Activated CD4-positive, alpha-beta memory T cell treated with anti-CD3 and anti-CD28 coated beads for 36 hours (primary cell): ENCODE measurements at regions of chr4 and their contacts with region 1.

Region 1: GRCh38 chr4:4488405-4489404 is 53.1 kb downstream of the STX18 start:
- DNase-seq: peak; percentile 84
- H3K4me3 Mint-ChIP-seq: no peak overlapping the region
- H3K27ac Mint-ChIP-seq: no peak overlapping the region
- H3K4me1 Mint-ChIP-seq: peaks cover 11% of the 10 kb centered on the region
- H3K27me3 Mint-ChIP-seq: no peaks in the 10 kb centered on the region

Region 2: GRCh38 chr4:4477796-4478195 is 10.9 kb before region 1 on chr4:
- CTCF ChIA-PET with region 1: interaction called, 10 read pairs
- POLR2A ChIA-PET with region 1: no interaction called
- intact Hi-C with region 1: no loop called
- DNase-seq: no peak
- H3K4me3 Mint-ChIP-seq: no peak overlapping the region
- H3K27ac Mint-ChIP-seq: no peak overlapping the region
- H3K4me1 Mint-ChIP-seq: peaks cover 16% of the 10 kb centered on the region
- H3K27me3 Mint-ChIP-seq: no peaks in the 10 kb centered on the region

Region 3: DNA sequence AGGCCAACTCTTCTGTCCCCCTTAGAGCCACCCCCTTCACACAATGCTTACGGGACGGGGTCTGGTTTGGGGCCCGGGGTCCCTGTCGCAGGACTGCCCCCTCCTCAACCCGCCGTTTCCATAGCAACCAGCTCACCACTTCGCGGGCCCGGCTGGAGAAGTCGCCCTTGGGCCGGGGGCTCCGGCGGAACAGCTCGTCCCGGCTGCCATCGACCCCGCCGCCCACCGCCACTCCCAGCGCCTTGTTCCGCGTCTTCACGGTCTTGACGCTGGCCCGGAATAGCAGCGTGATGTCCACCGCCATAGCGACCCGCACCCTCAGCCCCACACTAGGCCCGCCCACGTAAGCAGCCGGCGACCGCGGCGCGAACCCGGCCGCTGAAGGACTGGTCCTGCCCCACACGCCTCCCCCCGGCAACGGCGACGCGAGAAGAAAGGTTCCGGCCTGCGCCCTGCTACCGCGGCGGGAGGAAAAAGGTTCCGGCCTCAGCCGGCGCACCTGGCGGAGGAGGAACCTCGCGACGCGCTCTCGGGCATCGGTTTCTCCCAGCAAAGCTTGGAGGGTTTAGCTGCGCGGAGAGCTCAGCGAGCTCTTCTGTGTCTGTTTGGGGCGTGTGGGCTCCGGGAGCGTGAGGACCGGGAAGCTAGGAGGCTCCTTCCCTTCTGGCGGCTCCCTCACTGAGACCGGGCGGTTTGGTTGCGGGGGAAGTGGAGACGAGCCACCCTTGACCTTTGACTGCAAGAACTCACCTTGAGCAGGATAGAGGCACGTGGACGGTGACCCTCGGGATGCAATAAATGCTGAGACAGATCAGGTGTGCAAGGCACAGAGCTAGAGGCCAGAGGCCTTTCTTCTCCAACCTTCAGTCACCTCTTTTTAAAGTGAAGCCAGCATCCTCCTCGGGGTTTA is 53.2 kb after region 1 on chr4 and contains the start of gene STX18:
- CTCF ChIA-PET with region 1: interaction called, 5 read pairs
- POLR2A ChIA-PET with region 1: no interaction called
- intact Hi-C with region 1: loop called (anchors 2 kb)
- DNase-seq: peak; percentile 92
- H3K4me3 Mint-ChIP-seq: peak within 1 kb of the TSS; percentile 90
- H3K27ac Mint-ChIP-seq: peak within 1 kb of the TSS; percentile 86
- H3K4me1 Mint-ChIP-seq: peaks cover 46% of the 10 kb centered on the region
- H3K27me3 Mint-ChIP-seq: no peaks in the 10 kb centered on the region
- total RNA-seq, gene STX18: 20.2 to 23.2 TPM

Region 4: GRCh38 chr4:4689694-4690440 is 201.2 kb after region 1 on chr4:
- CTCF ChIA-PET with region 1: no interaction called
- POLR2A ChIA-PET with region 1: no interaction called
- intact Hi-C with region 1: loop called (anchors 5 kb)
- DNase-seq: peak; percentile 26
- H3K4me3 Mint-ChIP-seq: no peak overlapping the region
- H3K27ac Mint-ChIP-seq: no peak overlapping the region
- H3K4me1 Mint-ChIP-seq: peaks cover 11% of the 10 kb centered on the region
- H3K27me3 Mint-ChIP-seq: no peaks in the 10 kb centered on the region

Region 5: DNA sequence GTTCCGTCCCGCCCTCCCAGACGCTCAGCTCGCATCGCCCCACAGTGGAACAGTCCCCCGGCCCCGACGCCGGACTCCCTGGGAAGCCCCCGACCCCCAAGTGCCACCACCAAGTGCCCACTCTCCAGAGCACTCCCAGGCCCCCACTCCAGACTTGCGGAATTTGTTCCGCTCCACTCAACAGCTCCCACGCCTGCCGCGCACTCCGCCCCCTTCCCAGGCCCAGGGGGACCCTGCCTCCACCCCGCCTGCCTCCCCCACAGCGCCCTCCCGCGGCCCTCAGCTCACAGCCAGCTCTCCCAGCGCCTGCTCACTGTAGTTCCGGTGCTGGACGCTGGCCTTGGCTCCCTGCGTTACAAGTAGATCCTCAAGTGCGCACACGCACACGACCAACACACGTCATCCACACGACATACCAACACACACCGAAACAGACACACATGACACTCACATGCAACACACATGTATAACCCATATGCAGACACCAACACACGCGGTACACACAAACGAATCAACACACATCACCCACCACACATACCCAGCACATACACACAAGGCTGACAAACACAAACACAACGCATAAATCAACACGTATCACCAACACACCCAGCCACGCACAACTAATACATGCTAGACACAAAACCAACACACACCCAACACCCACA is 378.8 kb after region 1 on chr4:
- CTCF ChIA-PET with region 1: interaction called, 3 read pairs
- POLR2A ChIA-PET with region 1: no interaction called
- intact Hi-C with region 1: loop called (anchors 5 kb)
- DNase-seq: no peak
- H3K4me3 Mint-ChIP-seq: no peak overlapping the region
- H3K27ac Mint-ChIP-seq: no peak overlapping the region
- H3K4me1 Mint-ChIP-seq: peaks cover 15% of the 10 kb centered on the region
- H3K27me3 Mint-ChIP-seq: peaks cover 73% of the 10 kb centered on the region